Colonic mucosa (tissue), 4 donors: ENCODE measurements at regions of chr6 and their contacts with region 1.

Region 1: DNA sequence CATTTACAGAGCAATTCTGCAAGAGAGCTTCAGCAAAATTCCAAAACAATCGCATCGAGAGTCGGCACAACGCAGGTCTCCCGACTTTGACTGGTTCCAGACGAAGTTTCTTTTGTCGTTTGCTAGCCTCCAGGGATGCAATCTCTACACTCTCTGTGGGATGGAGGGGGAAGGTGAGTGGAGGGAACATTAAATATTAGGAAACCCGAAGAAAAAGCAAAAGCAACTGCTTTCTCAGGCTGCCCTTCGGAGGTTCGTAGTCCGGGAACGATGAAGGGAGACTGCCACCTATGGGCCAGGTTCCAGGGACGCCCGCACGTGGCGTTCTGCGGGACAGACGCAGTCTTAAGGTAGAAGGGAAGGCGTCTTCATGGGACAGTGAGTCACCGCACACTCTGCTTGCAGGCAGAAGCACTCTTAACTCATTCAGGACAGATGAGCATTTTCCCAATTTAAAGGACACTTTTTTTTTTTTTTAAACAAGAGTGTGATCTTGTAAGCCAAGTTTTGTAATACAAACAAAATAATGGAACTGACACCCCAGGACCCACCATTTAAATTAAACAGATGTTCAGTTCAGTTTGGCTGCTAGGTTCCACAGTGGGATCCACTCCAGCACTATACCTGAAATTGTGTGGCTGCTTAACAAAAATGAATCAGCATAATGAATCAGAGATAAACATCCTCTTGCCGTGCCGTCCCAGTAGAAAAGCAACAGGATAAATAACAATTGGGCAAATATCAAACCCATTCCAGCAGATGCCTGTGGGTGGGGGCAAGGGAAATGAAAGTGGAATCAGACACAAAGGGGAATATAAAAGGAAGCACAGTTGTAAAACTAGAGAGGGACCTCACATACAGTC is 65.8 kb upstream of the ARMC2 start:
- DNase-seq: peak; percentile 90
- H3K4me3 ChIP-seq: peak overlapping the region; percentile 17
- H3K27ac ChIP-seq: no peak overlapping the region
- H3K4me1 ChIP-seq: no peaks in the 10 kb centered on the region
- H3K27me3 ChIP-seq: no peaks in the 10 kb centered on the region
- CTCF ChIP-seq: peak; percentile 77

Region 2: DNA sequence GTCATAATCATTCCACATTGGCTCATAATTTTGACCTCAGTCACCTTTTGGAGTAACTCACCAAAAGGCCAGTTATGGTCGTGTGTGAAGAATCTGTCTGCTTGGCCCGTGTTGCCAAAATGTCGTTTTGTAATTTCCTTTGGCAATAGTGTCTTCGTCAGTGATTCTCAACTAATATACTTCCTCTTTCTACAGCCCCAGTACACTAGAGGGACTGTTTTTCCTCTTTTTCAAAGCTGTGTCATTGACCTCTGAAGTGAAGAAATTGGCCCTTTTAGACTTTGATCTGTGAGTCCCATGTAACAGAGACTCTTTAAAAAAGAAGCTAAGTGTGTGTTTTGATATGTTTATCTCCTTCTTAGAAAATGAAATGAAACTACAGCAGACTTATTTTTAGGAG is 216.5 kb before region 1 on chr6:
- intact Hi-C with region 1: loop called (anchors 5 kb)
- DNase-seq: peak; percentile 44
- H3K4me3 ChIP-seq: no peak overlapping the region
- H3K27ac ChIP-seq: peak overlapping the region; percentile 65
- H3K4me1 ChIP-seq: peaks cover 6% of the 10 kb centered on the region
- H3K27me3 ChIP-seq: no peaks in the 10 kb centered on the region
- CTCF ChIP-seq: no peak

Region 3: GRCh38 chr6:108896111-108896661 is 113.8 kb after region 1 on chr6:
- intact Hi-C with region 1: loop called (anchors 10 kb)
- DNase-seq: no peak
- H3K4me3 ChIP-seq: no peak overlapping the region
- H3K27ac ChIP-seq: no peak overlapping the region
- H3K4me1 ChIP-seq: peaks cover 2% of the 10 kb centered on the region
- H3K27me3 ChIP-seq: no peaks in the 10 kb centered on the region
- CTCF ChIP-seq: no peak

Region 4: GRCh38 chr6:108983151-108983550 is 200.7 kb after region 1 on chr6:
- intact Hi-C with region 1: no loop called
- DNase-seq: no peak
- H3K4me3 ChIP-seq: no peak overlapping the region
- H3K27ac ChIP-seq: no peak overlapping the region
- H3K4me1 ChIP-seq: no peaks in the 10 kb centered on the region
- H3K27me3 ChIP-seq: no peaks in the 10 kb centered on the region
- CTCF ChIP-seq: no peak